CD4-positive, alpha-beta memory T cell (primary cell): ENCODE measurements at regions of chr17 and their contacts with region 1.

Region 1: GRCh38 chr17:77451245-77451893 is 310.6 kb downstream of the SEC14L1 start:
- DNase-seq: peak; percentile 65 to 83 (median 73)
- H3K4me3 ChIP-seq: peak overlapping the region; percentile 94 to 96
- H3K4me3 Mint-ChIP-seq: peak overlapping the region; percentile 90 to 100 (median 96)
- H3K27ac ChIP-seq: peak overlapping the region; percentile 73
- H3K27ac Mint-ChIP-seq: peak overlapping the region; percentile 81 to 100 (median 98)
- H3K4me1 ChIP-seq: peaks cover 61% of the 10 kb centered on the region
- H3K4me1 Mint-ChIP-seq: peaks cover 25 to 91% (median 45%) of the 10 kb centered on the region in 4 donors
- H3K27me3 ChIP-seq: no peaks in the 10 kb centered on the region
- H3K27me3 Mint-ChIP-seq: no peaks in the 10 kb centered on the region

Region 2: GRCh38 chr17:77352996-77353395 is 98.4 kb before region 1 on chr17:
- CTCF ChIA-PET with region 1: no interaction called
- POLR2A ChIA-PET with region 1: no interaction called
- intact Hi-C with region 1: no loop called
- DNase-seq: no peak
- H3K4me3 ChIP-seq: no peak overlapping the region
- H3K4me3 Mint-ChIP-seq: no peak overlapping the region
- H3K27ac ChIP-seq: no peak overlapping the region
- H3K27ac Mint-ChIP-seq: peak overlapping the region in 1 of 7 donors; percentile 35
- H3K4me1 ChIP-seq: peaks cover 13% of the 10 kb centered on the region
- H3K4me1 Mint-ChIP-seq: peaks cover 12 to 54% (median 24%) of the 10 kb centered on the region in 4 donors
- H3K27me3 ChIP-seq: no peaks in the 10 kb centered on the region
- H3K27me3 Mint-ChIP-seq: no peaks in the 10 kb centered on the region

Region 3: DNA sequence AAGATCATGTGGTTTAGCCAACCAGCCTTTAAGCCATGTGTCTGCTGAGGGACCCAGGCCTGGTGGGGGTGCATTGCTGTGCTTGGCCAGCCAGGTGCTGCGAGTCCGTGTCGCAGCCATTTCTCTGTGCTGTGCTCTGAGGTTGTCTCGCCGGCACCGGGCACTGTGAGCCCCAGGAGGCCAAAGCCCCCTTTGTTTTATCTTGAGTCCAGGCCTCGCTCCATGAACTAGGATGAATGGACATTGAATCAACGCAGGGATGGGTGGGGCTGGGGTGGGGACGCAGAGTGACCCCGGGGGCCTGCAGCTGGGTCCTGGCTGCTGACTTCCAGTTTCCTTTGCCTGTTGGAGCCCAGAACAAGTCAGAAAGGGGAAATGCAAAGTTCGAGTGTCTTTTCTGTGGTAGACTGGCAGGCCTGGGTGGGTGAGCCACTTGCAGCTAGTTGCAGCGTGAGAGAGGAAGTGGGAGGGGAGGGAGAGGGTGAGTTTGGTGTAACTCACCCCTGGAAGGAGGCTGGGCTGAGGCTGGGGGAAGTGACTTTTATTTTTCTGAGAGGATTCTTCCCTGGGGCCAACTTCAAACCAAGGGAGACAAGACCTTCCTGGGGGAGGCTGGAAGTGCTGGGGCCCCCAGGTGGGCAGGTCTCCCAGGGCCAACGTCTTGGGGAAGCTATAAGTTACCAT is 14.1 kb after region 1 on chr17:
- CTCF ChIA-PET with region 1: interaction called, 6 read pairs
- POLR2A ChIA-PET with region 1: interaction called, 6,031 read pairs
- intact Hi-C with region 1: no loop called
- DNase-seq: peak; percentile 82 to 94 (median 84)
- H3K4me3 ChIP-seq: peak overlapping the region; percentile 6 to 47
- H3K4me3 Mint-ChIP-seq: peak overlapping the region; percentile 80 to 90 (median 84)
- H3K27ac ChIP-seq: peak overlapping the region; percentile 50
- H3K27ac Mint-ChIP-seq: peak overlapping the region; percentile 83 to 97 (median 85)
- H3K4me1 ChIP-seq: peaks cover 99% of the 10 kb centered on the region
- H3K4me1 Mint-ChIP-seq: peaks cover 60 to 95% (median 79%) of the 10 kb centered on the region in 4 donors
- H3K27me3 ChIP-seq: no peaks in the 10 kb centered on the region
- H3K27me3 Mint-ChIP-seq: no peaks in the 10 kb centered on the region

Region 4: DNA sequence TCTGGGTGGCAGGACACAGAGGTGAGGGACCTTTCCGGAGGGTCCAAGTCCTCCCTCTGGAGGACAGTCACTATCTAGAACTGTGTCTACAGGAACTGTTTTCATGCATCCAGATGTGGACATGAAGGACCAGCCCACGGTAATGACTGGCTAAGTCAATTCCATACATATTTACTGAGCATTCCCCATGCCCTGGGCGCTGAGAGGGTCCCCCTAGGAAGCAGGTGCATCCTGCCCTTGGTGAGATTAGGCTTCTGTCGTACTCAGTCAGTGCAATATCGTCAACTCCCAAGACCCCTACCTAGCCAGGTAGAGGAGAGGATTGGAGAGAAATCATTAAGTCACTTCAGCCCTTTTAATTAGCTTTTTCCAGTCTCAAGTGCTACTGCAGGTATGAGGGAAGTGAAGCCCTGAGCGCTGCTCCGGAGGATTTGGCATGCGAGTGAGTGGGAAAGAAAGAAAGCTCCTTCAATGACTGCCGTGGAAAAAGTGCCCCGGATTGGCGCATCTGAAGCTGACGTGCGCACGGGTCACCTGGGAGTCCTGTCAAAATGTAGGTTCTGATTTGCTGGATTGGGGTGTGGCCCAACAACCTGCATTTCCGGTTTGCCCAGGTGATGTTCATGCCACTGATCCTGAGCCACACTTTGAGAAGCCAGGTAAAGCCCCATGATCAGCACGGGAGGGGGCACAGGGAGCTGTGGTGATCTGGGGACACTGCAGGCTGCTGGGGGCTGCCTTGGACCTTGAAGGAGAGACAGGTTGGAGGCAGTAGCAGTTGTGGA is 139.8 kb after region 1 on chr17:
- CTCF ChIA-PET with region 1: no interaction called
- POLR2A ChIA-PET with region 1: no interaction called
- intact Hi-C with region 1: no loop called
- DNase-seq: no peak
- H3K4me3 ChIP-seq: no peak overlapping the region
- H3K4me3 Mint-ChIP-seq: no peak overlapping the region
- H3K27ac ChIP-seq: no peak overlapping the region
- H3K27ac Mint-ChIP-seq: no peak overlapping the region
- H3K4me1 ChIP-seq: peaks cover 3% of the 10 kb centered on the region
- H3K4me1 Mint-ChIP-seq: peaks cover 0 to 8% (median 5%) of the 10 kb centered on the region in 4 donors
- H3K27me3 ChIP-seq: no peaks in the 10 kb centered on the region
- H3K27me3 Mint-ChIP-seq: peaks cover 0 to 6% of the 10 kb centered on the region in 2 donors

Region 5: GRCh38 chr17:77717941-77718668 is 266.7 kb after region 1 on chr17:
- CTCF ChIA-PET with region 1: no interaction called
- POLR2A ChIA-PET with region 1: no interaction called
- intact Hi-C with region 1: no loop called
- DNase-seq: no peak
- H3K4me3 ChIP-seq: no peak overlapping the region
- H3K4me3 Mint-ChIP-seq: no peak overlapping the region
- H3K27ac ChIP-seq: no peak overlapping the region
- H3K27ac Mint-ChIP-seq: no peak overlapping the region
- H3K4me1 ChIP-seq: no peaks in the 10 kb centered on the region
- H3K4me1 Mint-ChIP-seq: peaks cover 0 to 2% (median 0%) of the 10 kb centered on the region in 4 donors
- H3K27me3 ChIP-seq: no peaks in the 10 kb centered on the region
- H3K27me3 Mint-ChIP-seq: peaks cover 3 to 4% of the 10 kb centered on the region in 2 donors